HepG2 (cell line): ENCODE measurements at regions of chr9 and their contacts with region 1.

Region 1: GRCh38 chr9:36328798-36329411 is 70.7 kb upstream of the GNE start:
- DNase-seq: peak; percentile 70
- ATAC-seq: peak; percentile 52
- H3K4me3 ChIP-seq: no peak overlapping the region
- H3K27ac ChIP-seq: no peak overlapping the region
- H3K4me1 ChIP-seq: peaks cover 39% of the 10 kb centered on the region
- H3K27me3 ChIP-seq: no peaks in the 10 kb centered on the region
- CTCF ChIP-seq: peak; percentile 80
- EP300 ChIP-seq: no peak
- POLR2A ChIP-seq: no peak
- RAD21 ChIP-seq: peak; percentile 63

Region 2: DNA sequence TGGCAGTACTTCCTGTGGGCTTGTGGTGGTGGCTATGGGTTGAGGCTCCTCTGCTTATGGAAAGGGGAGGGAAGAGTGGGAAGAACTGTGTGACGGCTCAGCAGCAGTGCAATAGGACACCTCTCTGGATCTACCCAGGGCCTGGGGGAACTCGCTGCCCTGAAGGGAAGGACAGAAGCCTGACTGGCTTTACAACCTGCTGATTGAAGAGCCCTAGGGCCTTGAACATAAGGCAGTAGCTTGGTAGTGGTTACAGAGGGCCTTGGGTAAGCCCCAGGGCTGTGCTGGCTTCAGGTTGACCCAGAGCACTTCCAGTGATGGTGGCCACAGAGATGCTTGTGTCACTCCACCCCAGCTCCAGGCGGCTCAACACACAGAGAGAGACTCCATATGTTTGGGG is 154.2 kb before region 1 on chr9:
- CTCF ChIA-PET with region 1: no interaction called
- POLR2A ChIA-PET with region 1: no interaction called
- in situ Hi-C with region 1: no loop called
- intact Hi-C with region 1: no loop called
- DNase-seq: no peak
- ATAC-seq: peak; percentile 65
- H3K4me3 ChIP-seq: no peak overlapping the region
- H3K27ac ChIP-seq: no peak overlapping the region
- H3K4me1 ChIP-seq: no peaks in the 10 kb centered on the region
- H3K27me3 ChIP-seq: peaks cover 4 to 29% of the 10 kb centered on the region in 2 experiments; a peak in 4 of 5 replicates
- CTCF ChIP-seq: no peak
- EP300 ChIP-seq: no peak
- POLR2A ChIP-seq: no peak
- RAD21 ChIP-seq: no peak

Region 3: GRCh38 chr9:36250079-36250478 is 78.8 kb before region 1 on chr9:
- CTCF ChIA-PET with region 1: interaction called, 49 read pairs
- POLR2A ChIA-PET with region 1: no interaction called
- in situ Hi-C with region 1: loop called (anchors 5 kb)
- intact Hi-C with region 1: loop called (anchors 1 kb)
- DNase-seq: no peak
- ATAC-seq: no peak
- H3K4me3 ChIP-seq: no peak overlapping the region
- H3K27ac ChIP-seq: no peak overlapping the region
- H3K4me1 ChIP-seq: peaks cover 11% of the 10 kb centered on the region
- H3K27me3 ChIP-seq: no peaks in the 10 kb centered on the region
- CTCF ChIP-seq: no peak
- EP300 ChIP-seq: no peak
- POLR2A ChIP-seq: no peak
- RAD21 ChIP-seq: no peak

Region 4: DNA sequence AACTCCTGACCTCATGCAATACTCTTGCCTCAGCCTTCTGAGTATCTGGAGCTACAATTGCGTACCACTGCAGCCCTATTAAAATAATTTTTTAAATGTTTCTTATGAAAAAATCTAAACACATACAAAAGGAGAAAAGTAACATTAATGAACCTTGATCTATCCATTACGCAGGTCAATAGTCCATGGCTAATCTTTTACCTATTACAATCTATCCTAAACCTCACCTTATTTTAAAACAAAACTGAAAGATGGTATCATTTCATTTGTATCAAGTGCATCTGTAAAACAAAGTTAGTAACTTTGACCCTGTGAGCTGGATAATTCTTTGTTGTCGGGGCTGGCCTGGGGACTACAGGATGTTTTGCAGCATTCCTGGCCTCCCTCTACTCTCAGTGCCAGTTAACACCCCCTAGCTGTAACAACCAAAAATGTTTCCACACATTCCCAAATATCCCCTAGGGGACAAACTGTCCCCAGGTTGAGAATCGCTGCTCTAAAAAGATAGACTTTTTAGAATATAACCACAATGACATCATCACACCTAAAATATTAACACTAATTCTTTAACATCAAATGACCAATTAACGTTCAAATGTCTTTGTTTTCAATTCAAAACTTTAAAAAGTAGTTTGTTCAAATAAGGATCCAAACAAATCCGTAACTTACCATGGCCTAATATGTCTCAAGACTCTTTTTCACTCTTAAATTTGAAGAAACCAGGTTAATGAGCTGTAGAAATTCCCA is 16.4 kb after region 1 on chr9:
- CTCF ChIA-PET with region 1: no interaction called
- POLR2A ChIA-PET with region 1: no interaction called
- in situ Hi-C with region 1: no loop called
- intact Hi-C with region 1: no loop called
- DNase-seq: no peak
- ATAC-seq: peak; percentile 60
- H3K4me3 ChIP-seq: no peak overlapping the region
- H3K27ac ChIP-seq: no peak overlapping the region
- H3K4me1 ChIP-seq: peaks cover 7% of the 10 kb centered on the region
- H3K27me3 ChIP-seq: no peaks in the 10 kb centered on the region
- CTCF ChIP-seq: 0 out of 2 replicates have a peak, but pooled peaks have one; percentile 15
- EP300 ChIP-seq: no peak
- POLR2A ChIP-seq: no peak
- RAD21 ChIP-seq: no peak